ENCODE measurements at regions of chr1 and their contacts with region 1.

Region 1: DNA sequence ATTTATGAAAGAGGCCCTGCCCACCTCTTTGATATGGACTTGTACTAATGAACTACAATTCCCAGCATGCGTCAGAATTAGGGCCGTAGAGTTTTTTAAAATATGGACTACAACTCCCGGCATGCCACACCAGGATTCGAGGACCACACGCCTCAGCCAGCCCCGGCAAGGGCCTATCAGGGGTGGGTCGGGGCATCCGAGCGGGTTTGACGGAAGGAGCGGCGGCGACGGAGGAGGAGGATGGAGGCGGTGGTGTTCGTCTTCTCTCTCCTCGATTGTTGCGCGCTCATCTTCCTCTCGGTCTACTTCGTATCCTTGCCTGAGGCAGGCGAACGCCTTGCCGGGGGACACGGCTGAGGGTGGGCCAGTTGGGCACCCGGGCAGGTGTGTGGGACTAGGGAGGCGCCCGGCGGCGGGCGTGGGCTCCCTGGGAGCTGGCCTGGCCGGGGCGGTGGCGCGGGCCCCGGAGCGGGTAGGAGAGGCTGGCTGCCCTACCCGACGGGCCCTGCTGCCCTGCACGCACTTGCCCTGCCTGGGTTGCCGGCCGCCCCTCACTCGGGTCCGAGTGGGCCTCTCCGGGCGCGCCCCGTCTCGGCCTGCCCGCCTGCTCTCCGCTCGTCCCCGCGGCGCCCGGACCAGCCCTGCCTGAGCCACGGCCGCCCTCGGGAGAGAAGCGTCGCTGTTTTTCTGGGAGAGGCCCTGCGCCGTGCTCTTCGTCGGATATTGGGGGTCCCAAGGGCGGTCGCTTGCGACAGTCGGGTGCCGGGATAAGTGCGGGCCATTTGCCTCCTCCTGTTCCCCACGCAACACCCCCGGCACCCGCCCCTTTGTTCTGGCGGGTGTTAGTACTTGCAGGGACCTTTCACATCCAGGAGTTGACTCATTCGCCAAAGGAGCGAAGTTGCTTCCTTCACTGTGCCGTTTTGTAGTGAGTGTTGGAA is at the start of gene CNIH4:
- DNase-seq: peak; percentile 97
- H3K4me3 Mint-ChIP-seq: peak within 1 kb of the TSS; percentile 80
- H3K27ac Mint-ChIP-seq: peak within 1 kb of the TSS; percentile 92
- H3K4me1 Mint-ChIP-seq: peaks cover 38% of the 10 kb centered on the region
- H3K27me3 Mint-ChIP-seq: no peaks in the 10 kb centered on the region
- total RNA-seq, gene CNIH4: 77.2 and 78.1 TPM in 2 replicates

Region 2: DNA sequence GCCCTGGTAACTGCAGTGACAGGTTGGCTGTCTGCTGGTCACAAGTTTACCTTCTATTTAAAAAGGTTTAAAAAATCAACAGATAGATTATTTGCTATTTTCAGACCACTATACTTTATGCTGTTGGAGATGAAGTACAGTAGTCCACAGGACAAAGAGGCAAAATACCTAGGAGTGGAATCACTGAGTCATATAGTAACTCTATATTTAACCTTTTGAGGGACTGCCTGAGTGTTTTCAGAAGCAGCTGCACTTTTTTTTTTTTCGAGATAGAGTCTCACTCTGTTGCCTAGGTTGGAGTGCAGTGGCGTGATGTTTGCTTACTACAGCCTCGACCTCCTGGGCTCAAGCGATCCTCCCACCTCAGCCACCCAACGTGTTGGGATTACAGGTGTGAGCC is 11.5 kb after region 1 on chr1:
- intact Hi-C with region 1: loop called (anchors 1 kb)
- DNase-seq: no peak
- H3K4me3 Mint-ChIP-seq: peak overlapping the region; percentile 47
- H3K27ac Mint-ChIP-seq: peak overlapping the region; percentile 86
- H3K4me1 Mint-ChIP-seq: peaks cover 55% of the 10 kb centered on the region
- H3K27me3 Mint-ChIP-seq: no peaks in the 10 kb centered on the region